A549 (cell line): ENCODE measurements at regions of chr14 and their contacts with region 1.

Region 1: GRCh38 chr14:49692811-49693734 is at the start of gene KLHDC1:
- DNase-seq: peak; percentile 49 to 78
- ATAC-seq: peak; percentile 76 to 80
- H3K4me3 ChIP-seq: peak within 1 kb of the TSS; percentile 53
- H3K27ac ChIP-seq: peak within 1 kb of the TSS; percentile 71 to 90
- H3K4me1 ChIP-seq: peaks cover 19% of the 10 kb centered on the region; the same call in 1 of the 3 replicates
- CTCF ChIP-seq: no peak
- EP300 ChIP-seq: no peak
- POLR2A ChIP-seq: peak; percentile 91
- RAD21 ChIP-seq: no peak
- polyA plus RNA-seq, gene KLHDC1: 0.70 and 0.74 TPM in 2 replicates

Region 2: DNA sequence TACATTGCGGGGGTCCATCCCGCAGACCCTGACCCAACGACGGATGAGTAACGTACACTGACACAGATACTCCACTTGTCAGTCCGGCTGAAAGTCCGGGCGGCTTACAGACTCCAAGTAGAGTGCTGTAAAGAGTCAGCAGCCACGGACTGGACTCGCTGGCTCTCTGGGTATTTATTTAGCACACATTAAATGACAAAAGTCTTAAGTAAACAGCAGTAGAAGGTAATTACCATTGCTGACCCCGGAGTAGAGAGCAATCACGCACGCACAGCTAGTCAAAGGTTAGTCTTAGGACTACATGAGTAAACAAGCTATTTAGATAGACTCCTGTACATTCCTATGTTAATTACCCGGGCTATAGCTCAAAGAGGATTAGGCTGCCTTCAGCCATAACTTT is 887.8 kb before region 1 on chr14:
- CTCF ChIA-PET with region 1: no interaction called
- POLR2A ChIA-PET with region 1: no interaction called
- DNase-seq: no peak
- ATAC-seq: no peak
- H3K4me3 ChIP-seq: no peak overlapping the region
- H3K27ac ChIP-seq: no peak overlapping the region
- H3K4me1 ChIP-seq: no peaks in the 10 kb centered on the region
- CTCF ChIP-seq: no peak
- EP300 ChIP-seq: no peak
- POLR2A ChIP-seq: no peak
- RAD21 ChIP-seq: no peak

Region 3: GRCh38 chr14:49677643-49678042 is 15.4 kb before region 1 on chr14:
- CTCF ChIA-PET with region 1: interaction called, 15 read pairs
- POLR2A ChIA-PET with region 1: no interaction called
- DNase-seq: peak in 1 of 2 experiments; percentile 33
- ATAC-seq: peak; percentile 88 to 90
- H3K4me3 ChIP-seq: no peak overlapping the region
- H3K27ac ChIP-seq: no peak overlapping the region
- H3K4me1 ChIP-seq: no peaks in the 10 kb centered on the region
- CTCF ChIP-seq: no peak
- EP300 ChIP-seq: no peak
- POLR2A ChIP-seq: no peak
- RAD21 ChIP-seq: no peak

Region 4: GRCh38 chr14:49767562-49768300 is 74.7 kb after region 1 on chr14 and contains the start of gene KLHDC2:
- CTCF ChIA-PET with region 1: interaction called, 6 read pairs
- POLR2A ChIA-PET with region 1: interaction called, 39 read pairs
- DNase-seq: peak; percentile 65 to 91
- ATAC-seq: peak; percentile 85 to 87
- H3K4me3 ChIP-seq: peak within 1 kb of the TSS; percentile 93
- H3K27ac ChIP-seq: peak within 1 kb of the TSS; percentile 94 to 96
- H3K4me1 ChIP-seq: peaks cover 33% of the 10 kb centered on the region
- CTCF ChIP-seq: peak; percentile 62
- EP300 ChIP-seq: no peak
- POLR2A ChIP-seq: peak; percentile 80
- RAD21 ChIP-seq: no peak; a peak in 1 of 5 replicates
- polyA plus RNA-seq, gene KLHDC2: 75.7 and 83.7 TPM in 2 replicates